Activated CD4-positive, alpha-beta T cell treated with anti-CD3 and anti-CD28 coated beads for 36 hours (primary cell): ENCODE measurements at regions of chr1 and their contacts with region 1.

Region 1: DNA sequence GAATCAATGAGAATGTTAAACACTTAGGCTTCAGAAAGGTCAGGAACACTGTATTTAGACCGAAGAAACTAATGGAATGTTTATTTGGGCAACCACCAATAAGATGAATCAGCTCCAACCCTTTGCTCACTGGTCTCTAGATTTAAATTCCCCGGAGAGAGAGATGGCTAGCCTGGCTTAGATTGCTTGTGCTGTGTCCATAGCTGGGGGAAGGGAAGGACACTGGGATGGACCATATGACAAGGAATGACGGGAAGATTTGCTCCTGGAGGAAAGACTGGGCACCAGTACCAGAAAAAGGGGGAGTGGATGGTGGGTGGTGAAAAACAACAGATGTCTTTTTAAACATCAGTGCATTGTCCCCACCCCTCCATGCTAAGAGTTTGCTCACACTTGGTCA is 426.6 kb downstream of the DUSP10 start:
- DNase-seq: no peak
- ATAC-seq: no peak
- H3K4me3 Mint-ChIP-seq: no peak overlapping the region
- H3K27ac Mint-ChIP-seq: no peak overlapping the region
- H3K4me1 Mint-ChIP-seq: no peaks in the 10 kb centered on the region
- H3K27me3 Mint-ChIP-seq: peaks cover 12% of the 10 kb centered on the region

Region 2: DNA sequence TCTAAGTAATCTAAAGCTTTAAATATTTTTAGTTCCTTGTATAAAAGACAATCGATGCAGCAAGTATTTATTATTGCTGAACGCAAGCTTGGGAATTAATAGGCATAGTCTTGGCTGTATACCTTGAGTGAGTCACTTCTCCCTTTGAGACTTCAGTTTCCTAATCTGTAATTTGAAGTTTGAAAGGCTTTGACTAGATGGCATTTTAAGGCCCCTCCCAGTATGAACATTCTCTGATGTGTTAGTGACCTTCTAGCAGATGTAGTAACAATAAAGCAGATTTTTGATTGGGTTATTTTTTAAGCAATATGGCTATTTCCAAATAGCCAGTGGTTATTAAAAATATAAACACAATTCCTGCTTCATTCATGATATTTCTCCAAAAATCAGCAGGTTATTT is 368.4 kb after region 1 on chr1:
- CTCF ChIA-PET with region 1: no interaction called
- POLR2A ChIA-PET with region 1: interaction called, 11 read pairs
- intact Hi-C with region 1: no loop called
- DNase-seq: no peak
- ATAC-seq: no peak
- H3K4me3 Mint-ChIP-seq: no peak overlapping the region
- H3K27ac Mint-ChIP-seq: no peak overlapping the region
- H3K4me1 Mint-ChIP-seq: peaks cover 2% of the 10 kb centered on the region
- H3K27me3 Mint-ChIP-seq: no peaks in the 10 kb centered on the region